ENCODE measurements at regions of chr6 and their contacts with region 1.

Region 1: GRCh38 chr6:127186889-127187288 is 68.4 kb downstream of the RSPO3 start:
- DNase-seq: no peak
- H3K4me3 ChIP-seq: no peak overlapping the region
- H3K27ac ChIP-seq: no peak overlapping the region
- H3K4me1 ChIP-seq: no peaks in the 10 kb centered on the region
- H3K27me3 ChIP-seq: no peaks in the 10 kb centered on the region
- CTCF ChIP-seq: peak in 1 of 2 donors; percentile 24
- POLR2A ChIP-seq: no peak

Region 2: DNA sequence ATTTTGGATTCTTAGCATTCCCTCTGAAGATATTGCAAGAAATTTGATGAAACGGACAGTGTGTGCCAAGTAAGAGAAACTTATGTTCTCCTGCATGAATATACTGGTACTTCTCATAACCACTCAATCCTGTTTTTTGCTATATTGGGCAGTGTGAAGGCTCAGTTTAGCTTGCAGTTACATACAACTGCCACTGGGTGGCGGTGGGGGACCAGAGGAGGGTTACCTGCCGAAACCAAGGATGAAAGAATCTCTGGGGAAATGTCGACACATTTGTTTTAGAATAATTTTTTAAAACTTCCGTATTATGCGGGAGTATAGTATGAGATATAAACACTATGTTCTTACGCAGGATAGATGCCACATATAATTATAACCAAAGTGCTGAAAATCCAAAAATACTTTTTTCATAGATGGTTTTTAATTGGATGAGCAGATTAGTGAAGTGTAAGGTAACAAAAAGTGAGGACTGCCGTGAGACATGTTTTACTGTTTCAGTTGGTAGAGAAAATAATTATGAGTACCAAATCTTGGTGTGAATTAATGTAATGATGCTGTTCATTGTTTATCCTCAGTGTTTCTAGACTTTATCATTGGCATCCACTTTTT is 1190.8 kb before region 1 on chr6:
- CTCF ChIA-PET with region 1: interaction called, 16 read pairs
- POLR2A ChIA-PET with region 1: no interaction called
- dilution Hi-C with region 1: no loop called
- intact Hi-C with region 1: loop called (anchors 5 kb)
- DNase-seq: peak; percentile 74
- H3K4me3 ChIP-seq: no peak overlapping the region
- H3K27ac ChIP-seq: no peak overlapping the region
- H3K4me1 ChIP-seq: no peaks in the 10 kb centered on the region
- H3K27me3 ChIP-seq: no peaks in the 10 kb centered on the region
- CTCF ChIP-seq: peak; percentile 84 to 97
- POLR2A ChIP-seq: no peak

Region 3: GRCh38 chr6:126176282-126176681 is 1010.6 kb before region 1 on chr6:
- CTCF ChIA-PET with region 1: interaction called, 43 read pairs
- POLR2A ChIA-PET with region 1: no interaction called
- dilution Hi-C with region 1: no loop called
- intact Hi-C with region 1: loop called (anchors 2 kb)
- DNase-seq: peak; percentile 51
- H3K4me3 ChIP-seq: no peak overlapping the region
- H3K27ac ChIP-seq: no peak overlapping the region
- H3K4me1 ChIP-seq: no peaks in the 10 kb centered on the region
- H3K27me3 ChIP-seq: no peaks in the 10 kb centered on the region
- CTCF ChIP-seq: peak; percentile 17 to 42
- POLR2A ChIP-seq: no peak

Region 4: DNA sequence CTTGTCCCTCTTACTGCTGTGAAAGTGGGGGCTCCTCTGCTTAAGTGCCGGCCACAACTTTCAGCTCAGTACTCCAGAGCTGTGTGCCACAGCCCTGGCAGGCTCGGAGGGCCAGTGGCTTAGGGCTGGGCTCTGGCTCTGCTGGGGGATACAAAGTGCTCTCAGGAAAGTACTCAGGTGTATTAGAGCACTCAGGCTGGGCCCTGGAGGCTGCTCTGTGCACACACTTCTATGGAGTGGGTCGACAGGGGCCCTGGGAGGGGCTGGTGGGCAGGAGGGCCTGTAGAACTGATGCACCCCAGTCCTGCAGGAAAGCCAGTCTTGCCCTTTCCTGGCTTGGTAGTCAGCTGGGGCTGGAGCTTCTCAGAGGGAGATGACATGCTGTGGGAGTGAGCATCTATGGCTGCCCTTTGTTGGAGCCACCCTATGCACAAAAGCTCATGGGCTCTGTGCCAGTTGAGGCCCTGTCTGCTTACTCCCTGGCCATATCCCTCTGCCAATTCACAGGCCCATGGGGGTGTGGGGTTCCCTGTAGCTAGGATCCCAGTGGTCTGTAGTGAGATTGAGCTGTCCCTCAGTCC is 825.0 kb before region 1 on chr6:
- CTCF ChIA-PET with region 1: interaction called, 18 read pairs
- POLR2A ChIA-PET with region 1: no interaction called
- dilution Hi-C with region 1: no loop called
- intact Hi-C with region 1: loop called (anchors 2 kb)
- DNase-seq: no peak
- H3K4me3 ChIP-seq: no peak overlapping the region
- H3K27ac ChIP-seq: no peak overlapping the region
- H3K4me1 ChIP-seq: peaks cover 5% of the 10 kb centered on the region
- H3K27me3 ChIP-seq: no peaks in the 10 kb centered on the region
- CTCF ChIP-seq: no peak
- POLR2A ChIP-seq: no peak

Region 5: DNA sequence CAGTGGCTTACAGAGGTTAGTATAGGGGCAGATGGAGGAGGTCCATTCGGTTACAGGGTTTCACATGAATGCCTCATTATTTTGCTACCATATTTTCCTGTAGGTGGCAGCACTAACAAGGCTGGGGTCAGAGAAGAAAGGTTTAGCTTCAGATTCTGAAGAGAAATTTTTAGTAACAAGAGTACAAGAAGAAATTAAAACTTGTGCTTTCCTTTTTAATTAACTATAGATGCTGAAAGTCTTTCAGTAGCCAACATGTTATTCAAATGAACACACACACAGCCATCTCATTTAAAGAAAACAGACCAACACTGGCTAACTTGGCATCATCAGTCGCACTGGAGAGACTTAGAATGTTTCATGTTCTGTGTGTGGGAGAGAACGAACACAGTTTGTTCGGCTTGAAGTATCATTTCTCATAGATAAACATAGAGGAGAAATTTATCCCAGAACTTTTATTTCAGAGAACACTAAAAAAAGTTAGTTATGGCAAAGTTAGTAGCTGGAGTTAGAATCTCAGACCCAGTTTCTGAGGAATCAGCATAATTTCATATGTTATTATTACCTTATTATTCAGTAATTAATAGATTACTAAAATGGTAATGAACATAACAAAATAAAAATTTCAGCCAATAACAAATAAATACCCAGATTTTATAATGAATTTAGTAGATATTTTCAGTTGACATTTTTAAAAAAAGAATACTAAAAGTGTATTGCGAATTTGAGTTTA is 382.4 kb before region 1 on chr6:
- CTCF ChIA-PET with region 1: interaction called, 47 read pairs
- POLR2A ChIA-PET with region 1: no interaction called
- dilution Hi-C with region 1: no loop called
- intact Hi-C with region 1: loop called (anchors 1 kb)
- DNase-seq: peak; percentile 77
- H3K4me3 ChIP-seq: no peak overlapping the region
- H3K27ac ChIP-seq: no peak overlapping the region
- H3K4me1 ChIP-seq: peaks cover 9% of the 10 kb centered on the region
- H3K27me3 ChIP-seq: no peaks in the 10 kb centered on the region
- CTCF ChIP-seq: peak; percentile 63 to 66
- POLR2A ChIP-seq: no peak

Region 6: GRCh38 chr6:127201321-127201720 is 14.4 kb after region 1 on chr6:
- CTCF ChIA-PET with region 1: interaction called, 10 read pairs
- POLR2A ChIA-PET with region 1: interaction called, 4 read pairs
- dilution Hi-C with region 1: no loop called
- intact Hi-C with region 1: no loop called
- DNase-seq: peak; percentile 14
- H3K4me3 ChIP-seq: no peak overlapping the region
- H3K27ac ChIP-seq: no peak overlapping the region
- H3K4me1 ChIP-seq: no peaks in the 10 kb centered on the region
- H3K27me3 ChIP-seq: no peaks in the 10 kb centered on the region
- CTCF ChIP-seq: no peak
- POLR2A ChIP-seq: no peak

Measured in endothelial cell of umbilical vein (primary cell).